ENCODE measurements at regions of chr14 and their contacts with region 1.

Region 1: DNA sequence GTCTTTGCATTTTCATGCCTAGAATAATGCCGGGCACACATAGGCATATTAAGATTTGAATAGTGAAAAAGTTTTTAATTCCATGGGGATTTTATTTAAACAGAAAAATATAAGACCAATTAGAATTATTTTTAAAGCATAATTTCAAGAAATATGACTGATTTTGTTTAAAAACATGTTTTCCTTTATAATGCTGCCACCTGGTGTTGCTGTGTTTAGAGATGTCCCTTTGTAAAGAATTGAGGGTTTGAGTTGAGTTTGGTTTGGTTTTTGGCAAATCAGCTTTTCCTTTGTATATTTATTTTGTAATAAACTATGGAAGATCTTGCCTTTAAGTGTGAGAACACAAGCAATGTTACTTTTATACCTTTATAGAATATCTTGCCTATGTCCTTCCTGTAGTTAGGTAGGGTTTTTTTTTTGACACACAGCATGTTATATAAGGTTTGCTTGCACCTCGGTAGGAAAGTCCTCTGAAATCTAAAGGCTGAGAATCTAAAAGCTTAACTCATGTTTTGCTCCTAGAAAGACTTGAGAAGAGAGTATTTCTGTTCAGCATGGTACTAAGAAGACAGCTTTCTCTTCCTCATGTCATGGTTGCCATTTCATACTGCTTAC is 31.4 kb upstream of the SNAPC1 start:
- DNase-seq: peak in 4 of 5 donors; percentile 30 to 34 (median 30)
- H3K4me3 ChIP-seq: no peak overlapping the region
- H3K4me3 Mint-ChIP-seq: no peak overlapping the region
- H3K27ac ChIP-seq: no peak overlapping the region
- H3K27ac Mint-ChIP-seq: peak overlapping the region in 6 of 7 donors; percentile 2 to 83 (median 52)
- H3K4me1 ChIP-seq: peaks cover 5% of the 10 kb centered on the region
- H3K4me1 Mint-ChIP-seq: peaks cover 10 to 16% (median 12%) of the 10 kb centered on the region in 4 donors
- H3K27me3 ChIP-seq: no peaks in the 10 kb centered on the region
- H3K27me3 Mint-ChIP-seq: no peaks in the 10 kb centered on the region

Region 2: GRCh38 chr14:61545726-61546455 is 185.0 kb before region 1 on chr14:
- CTCF ChIA-PET with region 1: interaction called, 14 read pairs
- POLR2A ChIA-PET with region 1: no interaction called
- intact Hi-C with region 1: loop called (anchors 5 kb)
- DNase-seq: no peak
- H3K4me3 ChIP-seq: no peak overlapping the region
- H3K4me3 Mint-ChIP-seq: peak overlapping the region in 1 of 8 donors; percentile 27
- H3K27ac ChIP-seq: no peak overlapping the region
- H3K27ac Mint-ChIP-seq: peak overlapping the region in 4 of 7 donors; percentile 16 to 85 (median 60)
- H3K4me1 ChIP-seq: no peaks in the 10 kb centered on the region
- H3K4me1 Mint-ChIP-seq: peaks cover 5 to 26% (median 16%) of the 10 kb centered on the region in 4 donors
- H3K27me3 ChIP-seq: no peaks in the 10 kb centered on the region
- H3K27me3 Mint-ChIP-seq: no peaks in the 10 kb centered on the region

Region 3: DNA sequence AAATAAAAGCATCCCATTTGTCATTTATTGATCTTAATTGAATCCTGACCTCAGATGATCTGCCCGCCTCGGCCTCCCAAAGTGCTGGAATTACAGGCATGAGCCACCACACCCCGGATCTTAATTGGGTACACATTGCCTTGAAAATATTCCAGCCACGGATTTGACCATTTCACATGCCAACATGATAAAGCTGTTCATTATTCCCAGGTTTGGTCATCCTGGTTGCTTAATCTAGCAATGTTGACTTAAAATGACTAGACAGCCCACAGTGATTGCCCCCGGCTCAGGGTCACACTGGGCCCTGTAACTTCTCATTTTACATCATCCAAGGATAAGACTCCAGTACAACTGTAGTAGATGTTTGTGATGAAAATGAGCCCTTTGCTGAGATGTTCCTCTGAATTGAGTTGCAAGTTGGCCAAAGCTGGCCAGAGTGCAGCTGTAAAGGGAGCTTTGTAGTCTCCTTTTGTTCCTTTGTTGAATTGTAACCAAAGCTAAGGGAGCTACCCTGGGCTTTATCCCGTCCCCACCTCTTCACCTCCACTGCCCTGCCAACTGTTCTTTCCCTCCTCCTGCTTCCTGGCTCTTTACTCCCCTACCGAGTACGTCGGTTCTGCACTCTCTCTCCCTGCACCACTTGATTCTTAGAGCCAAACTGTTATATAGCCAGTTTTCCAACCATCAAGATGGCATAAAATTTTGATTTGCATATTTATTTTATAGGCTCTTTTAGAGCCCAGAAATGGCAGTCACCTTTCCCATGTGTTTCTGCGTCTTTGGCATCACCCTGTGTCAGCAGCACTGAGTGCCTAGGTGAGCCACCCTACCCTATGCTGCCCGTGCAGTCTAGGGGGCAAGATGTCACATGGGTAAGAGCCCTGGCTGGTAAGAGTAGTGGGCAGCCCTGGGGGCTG is 176.9 kb before region 1 on chr14:
- CTCF ChIA-PET with region 1: interaction called, 9 read pairs
- POLR2A ChIA-PET with region 1: no interaction called
- intact Hi-C with region 1: loop called (anchors 5 kb)
- DNase-seq: no peak
- H3K4me3 ChIP-seq: no peak overlapping the region
- H3K4me3 Mint-ChIP-seq: peak overlapping the region in 2 of 8 donors; percentile 15 to 45
- H3K27ac ChIP-seq: no peak overlapping the region
- H3K27ac Mint-ChIP-seq: peak overlapping the region in 6 of 7 donors; percentile 23 to 92 (median 72)
- H3K4me1 ChIP-seq: peaks cover 21% of the 10 kb centered on the region
- H3K4me1 Mint-ChIP-seq: peaks cover 20 to 54% (median 29%) of the 10 kb centered on the region in 4 donors
- H3K27me3 ChIP-seq: no peaks in the 10 kb centered on the region
- H3K27me3 Mint-ChIP-seq: no peaks in the 10 kb centered on the region

Measured in CD4-positive, alpha-beta memory T cell (primary cell).